Activated naive CD4-positive, alpha-beta T cell treated with anti-CD3 and anti-CD28 coated beads for 36 hours (primary cell): ENCODE measurements at regions of chr3 and their contacts with region 1.

Region 1: DNA sequence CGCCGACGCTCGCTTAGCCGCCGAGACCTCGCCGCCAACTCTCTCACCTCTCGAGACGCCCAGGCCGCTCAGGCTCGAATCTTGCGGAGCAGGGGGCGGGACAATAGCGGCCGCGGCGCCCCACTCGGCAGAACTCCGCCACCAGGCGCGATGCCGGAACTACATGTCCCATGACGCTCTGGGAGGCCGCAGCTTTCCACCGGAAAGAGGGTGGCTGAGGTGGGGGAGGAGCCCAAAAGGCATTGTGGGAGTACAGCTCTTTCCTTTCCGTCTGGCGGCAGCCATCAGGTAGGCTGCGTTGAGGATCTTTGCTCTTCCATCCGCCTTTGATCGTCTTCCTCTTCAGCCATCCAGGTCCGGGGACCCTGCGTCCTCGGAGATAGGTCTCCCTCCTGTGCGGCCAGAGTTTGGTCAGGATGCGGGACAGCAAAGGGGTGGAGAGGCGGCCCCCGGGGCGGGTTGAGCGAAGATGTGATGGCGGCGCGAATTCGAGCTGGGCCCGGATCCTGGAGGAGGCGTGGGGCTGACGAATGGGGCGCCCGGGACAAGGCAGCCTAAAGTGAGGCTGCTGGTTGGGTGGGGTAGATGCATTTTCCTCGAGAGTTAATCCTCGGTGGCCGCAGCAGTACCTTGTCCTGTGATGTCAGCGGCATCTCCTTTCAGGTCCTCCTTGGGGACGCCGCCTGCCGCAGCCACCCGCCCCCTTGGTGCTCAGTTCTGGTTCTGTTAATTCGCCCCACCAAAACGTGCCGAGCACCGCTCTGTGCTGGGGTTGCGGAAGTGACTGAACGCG is at the starts of genes NKIRAS1 and RPL15:
- DNase-seq: peak; percentile 97
- H3K4me3 Mint-ChIP-seq: peak within 1 kb of the TSS; percentile 94
- H3K27ac Mint-ChIP-seq: peak within 1 kb of the TSS; percentile 99
- H3K4me1 Mint-ChIP-seq: peaks cover 47% of the 10 kb centered on the region
- H3K27me3 Mint-ChIP-seq: no peaks in the 10 kb centered on the region
- total RNA-seq, gene NKIRAS1: 2.4 to 3.1 TPM
- total RNA-seq, gene RPL15: 2,861 to 2,959 TPM

Region 2: DNA sequence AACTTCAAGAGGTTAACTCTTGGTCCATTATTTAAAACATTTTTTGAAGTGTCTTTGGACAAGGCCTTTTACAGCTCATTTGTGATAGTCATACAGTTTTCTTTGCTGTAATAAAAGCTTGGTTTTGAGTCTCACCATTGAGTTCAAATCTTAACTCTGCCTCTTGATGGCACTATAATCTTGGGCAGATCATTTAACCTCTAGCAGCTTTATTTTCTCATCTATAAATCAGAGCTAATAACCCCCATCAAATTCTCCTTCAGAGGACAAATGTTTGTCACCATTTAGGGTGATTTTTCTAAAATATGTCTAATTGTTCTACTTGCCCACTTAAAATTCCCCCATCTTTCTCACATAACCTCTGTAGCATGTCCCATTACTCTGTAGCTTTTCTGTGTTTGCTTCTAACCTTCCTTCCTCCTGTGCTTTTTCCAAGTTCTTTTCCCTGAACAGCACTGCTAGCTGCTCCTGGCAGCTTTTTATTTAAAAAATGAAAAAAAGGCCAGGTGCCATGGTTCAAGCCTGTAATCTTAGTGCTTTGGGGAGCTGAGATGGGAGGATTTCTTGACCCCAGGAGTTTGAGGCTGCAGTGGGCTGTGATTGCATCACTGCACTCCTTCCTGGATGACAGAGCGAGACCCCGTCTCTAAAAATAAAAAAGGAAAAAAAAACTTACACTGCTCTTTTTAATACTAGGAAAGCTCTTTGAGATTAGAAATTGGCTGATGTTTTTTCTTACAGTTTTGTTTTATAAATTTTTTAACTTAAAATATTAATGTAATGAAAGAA is 82.8 kb before region 1 on chr3:
- CTCF ChIA-PET with region 1: no interaction called
- intact Hi-C with region 1: loop called (anchors 5 kb)
- DNase-seq: no peak
- H3K4me3 Mint-ChIP-seq: no peak overlapping the region
- H3K27ac Mint-ChIP-seq: no peak overlapping the region
- H3K4me1 Mint-ChIP-seq: peaks cover 51% of the 10 kb centered on the region
- H3K27me3 Mint-ChIP-seq: no peaks in the 10 kb centered on the region